Sciatic nerve (tissue), 2 donors: ENCODE measurements at regions of chr5 and their contacts with region 1.

Region 1: GRCh38 chr5:131647048-131647769 is 12.2 kb upstream of the RAPGEF6 start:
- DNase-seq: no peak
- ATAC-seq: no peak

Region 2: GRCh38 chr5:131610198-131611063 is 36.8 kb before region 1 on chr5:
- intact Hi-C with region 1: loop called (anchors 1 kb)
- DNase-seq: no peak
- ATAC-seq: no peak

Region 3: DNA sequence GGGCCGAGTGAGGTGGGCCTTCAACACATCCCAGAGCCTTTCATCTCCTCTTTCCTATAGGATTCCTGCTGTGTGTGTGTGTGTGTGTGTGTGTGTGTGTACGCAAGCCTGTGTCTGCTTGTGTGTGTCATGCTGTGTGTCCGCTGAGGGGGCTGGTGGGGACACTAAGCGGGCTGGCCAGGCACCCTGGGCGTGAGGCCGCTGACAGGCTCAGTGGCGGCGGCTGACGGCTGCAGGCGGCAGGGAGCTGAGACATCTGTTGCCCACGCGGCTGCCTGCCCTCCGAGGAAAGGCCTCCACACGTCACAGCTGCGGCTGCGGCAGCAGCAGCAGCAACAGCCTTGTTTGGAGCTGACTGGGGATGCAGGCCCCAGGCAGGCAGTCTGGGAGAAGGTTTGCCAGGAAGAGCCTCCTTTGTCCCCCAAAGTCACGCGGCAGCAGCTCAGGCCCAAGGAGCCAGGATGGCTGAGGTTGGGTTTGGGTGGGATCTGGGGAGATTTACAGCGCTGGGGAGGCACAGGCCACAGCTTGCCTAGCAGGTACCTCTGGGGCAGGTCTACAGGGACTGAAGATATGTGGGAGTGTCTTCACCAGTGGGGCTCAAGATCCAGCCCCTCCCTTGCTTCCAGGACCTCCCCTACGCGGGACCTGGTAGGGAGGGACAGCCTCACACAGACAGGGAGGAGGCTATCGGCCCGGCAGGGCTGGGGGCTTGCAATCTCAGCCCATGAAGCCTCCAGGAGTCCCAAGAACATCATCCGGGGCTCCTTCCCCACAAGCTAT is 612.1 kb after region 1 on chr5:
- intact Hi-C with region 1: no loop called
- DNase-seq: peak; percentile 83
- ATAC-seq: peak; percentile 87